CD8-positive, alpha-beta T cell (primary cell): ENCODE measurements at regions of chr10 and their contacts with region 1.

Region 1: DNA sequence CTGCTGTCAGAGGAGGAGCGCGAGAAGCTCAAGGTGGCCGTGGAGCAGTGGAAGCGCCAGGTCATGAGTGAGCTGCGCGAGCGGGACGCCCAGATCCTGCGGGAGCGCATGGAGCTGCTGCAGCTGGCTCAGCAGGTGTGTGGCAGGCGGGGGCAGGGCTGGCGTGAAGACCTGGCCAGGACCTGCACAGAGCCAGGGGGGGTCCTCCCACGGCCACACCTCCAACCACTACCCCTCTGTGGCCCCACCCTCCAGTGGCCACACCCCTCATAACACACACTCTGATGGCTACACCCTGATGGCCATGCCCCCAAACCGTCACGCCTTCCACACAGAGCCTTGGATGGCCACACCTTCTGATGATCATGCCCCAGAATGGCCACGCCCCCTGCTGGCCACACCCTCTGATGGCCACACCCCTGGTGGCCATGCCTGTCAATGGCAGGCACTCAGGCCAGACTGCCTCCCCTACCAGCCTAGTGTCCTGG is 23.4 kb upstream of the DPYSL4 start:
- DNase-seq: peak in 6 of 9 experiments; percentile 24 to 63 (median 44)
- ATAC-seq: peak; percentile 45
- H3K4me3 ChIP-seq: no peak overlapping the region
- H3K4me3 Mint-ChIP-seq: no peak overlapping the region
- H3K27ac ChIP-seq: no peak overlapping the region
- H3K27ac Mint-ChIP-seq: no peak overlapping the region
- H3K4me1 ChIP-seq: peaks cover 32% of the 10 kb centered on the region
- H3K4me1 Mint-ChIP-seq: peaks cover 22% of the 10 kb centered on the region
- H3K27me3 ChIP-seq: no peaks in the 10 kb centered on the region
- H3K27me3 Mint-ChIP-seq: peaks cover 3% of the 10 kb centered on the region
- CTCF ChIP-seq: no peak

Region 2: GRCh38 chr10:132185601-132186487 is 22.5 kb after region 1 on chr10:
- CTCF ChIA-PET with region 1: no interaction called
- POLR2A ChIA-PET with region 1: no interaction called
- intact Hi-C with region 1: loop called in 1 of 2 experiments (anchors 1 kb)
- DNase-seq: peak; percentile 28 to 81 (median 59)
- ATAC-seq: peak; percentile 92
- H3K4me3 ChIP-seq: peak overlapping the region; percentile 32 to 39
- H3K4me3 Mint-ChIP-seq: no peak overlapping the region
- H3K27ac ChIP-seq: no peak overlapping the region
- H3K27ac Mint-ChIP-seq: no peak overlapping the region
- H3K4me1 ChIP-seq: peaks cover 17% of the 10 kb centered on the region
- H3K4me1 Mint-ChIP-seq: peaks cover 7% of the 10 kb centered on the region
- H3K27me3 ChIP-seq: peaks cover 10 to 11% of the 10 kb centered on the region in 2 experiments
- H3K27me3 Mint-ChIP-seq: peaks cover 56% of the 10 kb centered on the region
- CTCF ChIP-seq: no peak